Thyroid gland (tissue), 4 donors: ENCODE measurements at regions of chr17 and their contacts with region 1.

Region 1: DNA sequence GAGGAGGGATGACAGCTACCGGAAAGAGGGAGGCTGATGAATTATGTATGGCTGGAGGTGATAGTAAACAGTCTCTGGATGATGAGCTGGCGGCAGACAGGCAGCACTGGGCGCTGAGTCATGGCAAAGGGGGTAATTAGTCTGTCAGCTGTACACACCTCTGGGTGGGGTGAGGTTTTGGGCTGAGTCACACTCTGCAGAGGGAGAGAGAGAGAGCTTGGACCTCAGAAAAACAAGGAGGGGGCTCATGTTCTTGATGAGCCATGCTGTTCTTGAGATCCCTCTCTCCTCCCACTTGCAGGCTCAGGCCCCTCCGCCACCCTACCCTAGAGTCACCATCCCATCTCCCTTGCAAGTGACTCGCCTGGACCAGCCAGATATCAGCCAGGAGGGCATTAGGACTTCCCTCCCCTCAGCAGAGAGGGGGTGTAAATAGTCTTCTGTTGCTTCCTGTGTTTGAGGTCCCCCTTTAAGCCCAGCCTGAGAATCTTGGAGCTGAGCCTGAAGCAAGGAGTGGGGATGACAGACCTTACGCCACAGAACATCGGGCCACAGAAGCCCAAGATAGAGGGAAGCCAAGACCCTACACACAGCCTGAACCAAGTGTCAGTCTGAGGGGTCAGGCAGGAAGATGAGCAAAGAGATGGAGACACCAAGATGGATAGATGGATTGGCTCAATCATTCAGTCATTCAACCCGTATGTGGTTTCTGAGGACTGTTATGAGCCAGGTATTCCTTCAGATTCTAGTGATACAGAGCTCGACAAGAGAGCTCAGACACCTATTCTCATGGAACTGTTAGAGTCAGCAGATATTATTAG is 383.2 kb upstream of the CCL2 start:
- DNase-seq: no peak
- H3K4me3 ChIP-seq: no peak overlapping the region
- H3K27ac ChIP-seq: no peak overlapping the region
- H3K4me1 ChIP-seq: no peaks in the 10 kb centered on the region
- H3K27me3 ChIP-seq: no peaks in the 10 kb centered on the region
- CTCF ChIP-seq: no peak
- POLR2A ChIP-seq: no peak

Region 2: DNA sequence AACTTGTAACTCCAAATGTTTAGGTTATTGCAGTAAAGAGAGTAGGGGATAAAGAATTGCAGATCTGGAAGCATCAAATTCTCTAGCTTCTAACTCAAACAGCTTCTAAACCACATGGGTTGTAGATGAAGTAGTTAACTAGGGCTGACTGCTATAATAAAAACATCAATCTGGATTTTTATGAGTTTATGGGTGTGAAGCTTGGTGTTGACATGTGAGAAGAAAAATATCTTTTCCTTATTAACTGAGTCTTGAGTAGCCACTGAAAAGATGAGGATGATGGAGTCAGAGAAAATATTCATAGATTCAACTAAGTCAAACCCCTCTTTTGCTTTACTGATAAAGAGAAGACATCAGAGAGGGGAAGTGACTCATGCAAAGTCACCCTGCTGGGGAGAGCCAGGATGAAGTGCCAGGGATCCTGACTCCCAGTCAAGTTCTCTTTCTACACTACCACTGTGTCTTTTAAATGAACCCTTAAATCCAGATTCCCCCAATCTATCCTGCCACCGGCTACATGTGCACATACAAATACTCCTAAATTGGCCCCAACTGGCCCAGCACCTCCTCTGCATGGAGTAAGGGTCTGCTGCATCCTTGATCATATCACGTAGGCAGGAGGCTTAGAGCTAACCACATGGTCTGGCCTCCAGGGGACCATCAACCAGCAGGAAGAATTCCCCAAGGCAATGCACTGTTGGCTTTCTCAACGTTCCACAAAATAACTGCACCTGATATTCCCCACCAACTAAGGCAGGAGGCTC is 119.2 kb after region 1 on chr17:
- intact Hi-C with region 1: loop called (anchors 5 kb)
- DNase-seq: no peak
- H3K4me3 ChIP-seq: no peak overlapping the region
- H3K27ac ChIP-seq: no peak overlapping the region
- H3K4me1 ChIP-seq: no peaks in the 10 kb centered on the region
- H3K27me3 ChIP-seq: no peaks in the 10 kb centered on the region
- CTCF ChIP-seq: no peak
- POLR2A ChIP-seq: no peak

Region 3: DNA sequence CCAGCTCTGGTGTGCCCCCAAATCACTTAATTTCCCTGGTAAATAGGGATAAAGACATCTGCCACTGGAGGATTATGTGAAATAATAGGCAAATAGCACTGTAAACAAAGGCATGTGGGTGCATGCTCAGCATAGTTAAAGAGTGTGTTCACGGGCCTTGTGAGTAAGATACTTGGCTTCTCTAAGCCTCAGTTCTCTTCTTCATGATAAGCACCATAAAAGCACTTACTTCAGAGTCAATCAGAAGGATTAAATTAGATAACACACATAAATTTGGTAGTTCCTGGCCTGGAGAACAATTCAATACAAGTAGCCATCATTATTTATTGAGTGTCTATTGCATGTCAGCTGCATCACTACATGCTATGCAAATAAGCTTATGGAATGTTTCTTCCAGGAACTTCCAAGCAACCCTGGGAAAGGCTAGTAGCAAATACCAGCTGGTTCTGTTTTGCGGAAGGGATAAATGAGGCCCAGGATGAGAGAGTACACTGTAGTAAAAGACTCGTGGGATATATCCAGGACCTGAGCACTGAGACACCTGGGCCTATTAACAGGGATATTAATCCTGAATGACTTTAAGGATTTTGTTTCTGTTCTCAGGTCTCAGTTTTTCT is 428.1 kb after region 1 on chr17:
- intact Hi-C with region 1: no loop called
- DNase-seq: no peak
- H3K4me3 ChIP-seq: no peak overlapping the region
- H3K27ac ChIP-seq: no peak overlapping the region
- H3K4me1 ChIP-seq: no peaks in the 10 kb centered on the region
- H3K27me3 ChIP-seq: no peaks in the 10 kb centered on the region
- CTCF ChIP-seq: no peak
- POLR2A ChIP-seq: no peak